ENCODE measurements at regions of chr12 and their contacts with region 1.

Region 1: DNA sequence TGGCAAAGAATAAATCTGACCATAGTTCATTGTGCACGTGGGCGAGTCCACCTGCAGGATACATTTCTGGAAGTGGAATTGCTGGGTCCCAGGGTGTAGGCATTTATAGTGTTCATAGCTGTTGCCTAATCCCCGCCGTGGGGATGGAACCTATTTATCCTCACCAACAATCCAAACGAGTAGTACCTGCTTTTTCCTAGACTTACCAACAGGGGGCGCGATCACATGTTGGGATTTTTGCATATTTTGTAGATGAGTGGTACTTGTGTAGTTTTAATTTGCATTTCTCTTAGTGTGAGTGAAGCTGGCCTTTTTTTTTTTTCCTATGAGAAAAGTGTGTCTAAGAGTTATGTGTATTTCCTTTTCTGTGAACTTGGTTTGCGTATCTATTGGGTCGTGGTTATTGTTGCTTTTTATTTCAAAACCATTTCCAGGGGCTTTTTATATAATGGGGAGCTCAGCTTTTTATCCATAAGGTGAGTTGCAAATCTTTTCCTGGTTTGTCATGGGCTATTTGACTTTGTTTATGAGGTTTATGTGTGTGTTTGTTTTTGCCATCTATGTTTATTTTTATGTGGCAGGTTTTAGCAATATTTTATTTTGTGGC is 67.2 kb downstream of the CCDC92 start:
- DNase-seq: peak; percentile 47 to 81 (median 55)
- H3K4me3 ChIP-seq: no peak overlapping the region
- H3K27ac ChIP-seq: no peak overlapping the region
- H3K4me1 ChIP-seq: no peaks in the 10 kb centered on the region
- H3K27me3 ChIP-seq: no peaks in the 10 kb centered on the region
- CTCF ChIP-seq: peak; percentile 57 to 82 (median 72)
- POLR2A ChIP-seq: no peak

Region 2: DNA sequence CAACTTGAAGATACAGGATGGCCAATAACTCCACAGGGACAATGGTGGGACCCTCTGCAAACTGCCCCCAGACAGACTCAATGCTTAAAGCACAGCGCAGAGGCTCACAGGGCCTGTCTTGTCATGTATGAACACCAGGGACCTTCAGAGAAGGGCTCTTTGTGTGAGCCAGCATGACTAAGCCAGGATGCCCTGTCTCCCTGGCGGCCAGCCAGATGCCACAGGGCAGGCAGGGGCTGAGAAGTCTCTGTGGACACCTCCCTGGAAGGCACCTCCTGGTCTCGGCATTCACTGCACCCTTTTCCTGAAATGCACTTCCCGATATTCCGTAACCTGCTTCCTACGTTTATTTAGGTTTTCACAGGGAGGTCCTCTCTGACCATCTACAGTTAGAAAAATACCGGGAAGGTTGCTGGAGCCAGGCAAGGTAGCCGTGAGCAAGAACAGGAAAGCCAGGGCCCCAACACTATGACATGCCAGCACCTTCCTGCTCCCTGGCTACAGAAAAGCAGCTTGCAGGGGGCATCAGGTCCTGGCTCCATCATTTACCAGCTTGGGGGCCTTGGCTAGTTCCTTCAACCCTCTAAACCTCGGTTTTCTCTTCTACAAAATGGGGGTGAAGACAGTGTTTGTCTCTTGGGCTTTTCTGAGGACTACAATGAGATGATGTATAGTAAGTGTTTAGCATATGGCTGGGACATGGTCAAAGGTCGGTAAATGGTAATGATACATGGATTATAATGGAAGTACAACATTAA is 819.5 kb before region 1 on chr12:
- intact Hi-C with region 1: no loop called
- DNase-seq: peak; percentile 85 to 93 (median 89)
- H3K4me3 ChIP-seq: no peak overlapping the region
- H3K27ac ChIP-seq: peak overlapping the region in 3 of 5 donors; percentile 13 to 81 (median 35)
- H3K4me1 ChIP-seq: peaks cover 22 to 51% of the 10 kb centered on the region in 2 donors
- H3K27me3 ChIP-seq: no peaks in the 10 kb centered on the region
- CTCF ChIP-seq: peak in 5 of 6 experiments; percentile 18 to 53 (median 47)
- POLR2A ChIP-seq: no peak

Region 3: DNA sequence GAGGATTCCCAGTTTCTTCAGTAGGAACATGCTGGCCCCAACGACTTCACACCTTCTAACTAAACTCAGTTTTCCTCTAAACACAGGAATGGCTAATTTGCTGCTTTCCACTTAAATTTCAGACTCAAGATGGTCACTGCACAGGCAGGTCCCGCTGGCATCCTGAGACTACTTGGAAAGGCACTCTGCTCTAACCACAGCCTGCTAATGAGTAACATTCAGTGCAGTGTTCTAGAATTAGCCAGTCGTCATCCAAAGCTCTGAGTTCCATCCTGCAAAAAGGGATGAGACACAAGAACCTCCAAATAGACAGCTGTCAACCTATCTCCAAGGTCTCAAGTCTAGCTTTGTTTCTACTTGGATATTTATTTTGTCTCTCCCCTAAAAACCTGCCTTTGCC is 61.2 kb after region 1 on chr12:
- intact Hi-C with region 1: loop called in 1 of 2 experiments (anchors 5 kb)
- DNase-seq: no peak
- H3K4me3 ChIP-seq: no peak overlapping the region
- H3K27ac ChIP-seq: no peak overlapping the region
- H3K4me1 ChIP-seq: peaks cover 0 to 9% of the 10 kb centered on the region in 2 donors
- H3K27me3 ChIP-seq: no peaks in the 10 kb centered on the region
- CTCF ChIP-seq: no peak
- POLR2A ChIP-seq: no peak

Region 4: DNA sequence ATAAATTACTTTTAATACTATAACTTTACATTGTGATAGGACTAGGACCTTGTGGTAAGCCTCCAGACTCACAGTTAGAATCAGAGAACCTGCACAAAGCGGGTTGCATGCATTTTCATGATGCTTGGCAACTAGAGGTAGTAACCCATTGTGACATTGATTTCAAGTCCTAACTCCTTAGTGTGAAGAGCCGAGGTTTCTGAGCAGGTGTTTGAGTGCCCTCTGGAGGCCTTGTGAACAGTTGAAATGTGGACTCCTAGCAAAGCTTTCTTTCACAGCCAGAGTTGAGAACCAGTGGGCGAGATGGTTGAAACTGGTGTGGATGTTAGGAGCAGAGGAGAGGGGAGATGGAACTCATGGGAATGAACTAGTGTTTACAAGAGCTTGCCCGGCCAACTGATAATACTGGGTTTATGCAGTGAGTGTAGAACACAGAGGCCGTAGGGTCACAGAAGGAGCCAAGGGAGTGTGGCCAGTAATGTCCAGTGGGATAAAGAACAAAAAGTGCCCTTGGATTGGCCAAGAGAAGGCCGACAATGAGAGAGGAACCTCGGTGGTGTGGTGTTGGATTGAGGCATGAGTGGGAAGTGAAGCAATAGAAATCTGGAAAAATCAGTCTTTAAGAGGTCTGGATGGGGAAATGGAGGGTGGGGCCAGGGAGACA is 78.5 kb after region 1 on chr12:
- intact Hi-C with region 1: loop called (anchors 5 to 10 kb)
- DNase-seq: peak; percentile 28 to 74 (median 49)
- H3K4me3 ChIP-seq: no peak overlapping the region
- H3K27ac ChIP-seq: peak overlapping the region in 1 of 5 donors; percentile 15
- H3K4me1 ChIP-seq: peaks cover 0 to 11% of the 10 kb centered on the region in 2 donors
- H3K27me3 ChIP-seq: no peaks in the 10 kb centered on the region
- CTCF ChIP-seq: peak; percentile 19 to 64 (median 58)
- POLR2A ChIP-seq: no peak

Region 5: DNA sequence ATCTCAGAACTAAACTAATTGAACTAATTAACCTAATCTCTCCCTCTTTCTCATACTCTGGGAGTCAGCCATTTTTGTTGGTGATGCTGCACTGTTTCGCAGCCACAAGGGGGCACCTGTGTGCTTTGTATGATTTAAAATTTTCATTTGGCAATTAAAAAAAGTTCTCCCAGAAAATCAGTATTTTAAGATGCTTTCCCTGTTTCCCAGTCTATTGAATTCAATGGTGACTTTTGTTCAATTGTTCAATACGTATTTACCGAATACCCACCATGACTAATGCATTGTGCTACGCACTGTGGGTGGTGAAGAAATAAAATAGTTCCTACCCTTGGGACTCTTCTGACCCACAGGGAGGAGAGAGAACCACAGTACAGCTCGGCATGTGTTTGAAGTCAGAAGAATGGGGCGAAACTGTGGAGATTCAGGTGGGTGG is 131.3 kb after region 1 on chr12:
- intact Hi-C with region 1: loop called in 1 of 2 experiments (anchors 5 kb)
- DNase-seq: peak in 6 of 7 donors; percentile 30 to 73 (median 54)
- H3K4me3 ChIP-seq: no peak overlapping the region
- H3K27ac ChIP-seq: no peak overlapping the region
- H3K4me1 ChIP-seq: no peaks in the 10 kb centered on the region
- H3K27me3 ChIP-seq: no peaks in the 10 kb centered on the region
- CTCF ChIP-seq: peak; percentile 70 to 96 (median 90)
- POLR2A ChIP-seq: no peak

Region 6: GRCh38 chr12:124053851-124054250 is 148.4 kb after region 1 on chr12:
- intact Hi-C with region 1: no loop called
- DNase-seq: peak; percentile 46 to 79 (median 67)
- H3K4me3 ChIP-seq: no peak overlapping the region
- H3K27ac ChIP-seq: no peak overlapping the region
- H3K4me1 ChIP-seq: peaks cover 7 to 13% of the 10 kb centered on the region in 2 donors
- H3K27me3 ChIP-seq: no peaks in the 10 kb centered on the region
- CTCF ChIP-seq: peak; percentile 20 to 79 (median 60)
- POLR2A ChIP-seq: no peak

Measured in adrenal gland (tissue), 19 donors.